PC-3 (cell line): ENCODE measurements at regions of chr3 and their contacts with region 1.

Region 1: GRCh38 chr3:94234177-94234788 is 171.4 kb downstream of the NSUN3 start:
- DNase-seq: peak; percentile 70
- ATAC-seq: peak; percentile 86
- H3K4me3 ChIP-seq: no peak overlapping the region
- H3K27ac ChIP-seq: no peak overlapping the region
- H3K4me1 ChIP-seq: no peaks in the 10 kb centered on the region
- H3K27me3 ChIP-seq: no peaks in the 10 kb centered on the region
- CTCF ChIP-seq: peak; percentile 91

Region 2: GRCh38 chr3:94130690-94131089 is 103.6 kb before region 1 on chr3:
- CTCF ChIA-PET with region 1: no interaction called
- POLR2A ChIA-PET with region 1: no interaction called
- intact Hi-C with region 1: no loop called
- DNase-seq: no peak
- ATAC-seq: no peak
- H3K4me3 ChIP-seq: no peak overlapping the region
- H3K27ac ChIP-seq: no peak overlapping the region
- H3K4me1 ChIP-seq: no peaks in the 10 kb centered on the region
- H3K27me3 ChIP-seq: no peaks in the 10 kb centered on the region
- CTCF ChIP-seq: no peak

Region 3: GRCh38 chr3:94173676-94174434 is 60.4 kb before region 1 on chr3:
- CTCF ChIA-PET with region 1: interaction called, 3 read pairs
- POLR2A ChIA-PET with region 1: no interaction called
- intact Hi-C with region 1: loop called (anchors 5 kb)
- DNase-seq: peak; percentile 76
- ATAC-seq: peak; percentile 94
- H3K4me3 ChIP-seq: peak overlapping the region; percentile 6; the same call in 1 of the 2 replicates
- H3K27ac ChIP-seq: peak overlapping the region; percentile 55
- H3K4me1 ChIP-seq: peaks cover 26% of the 10 kb centered on the region
- H3K27me3 ChIP-seq: no peaks in the 10 kb centered on the region
- CTCF ChIP-seq: no peak